Lower leg skin (tissue), 4 donors: ENCODE measurements at regions of chr12 and their contacts with region 1.

Region 1: DNA sequence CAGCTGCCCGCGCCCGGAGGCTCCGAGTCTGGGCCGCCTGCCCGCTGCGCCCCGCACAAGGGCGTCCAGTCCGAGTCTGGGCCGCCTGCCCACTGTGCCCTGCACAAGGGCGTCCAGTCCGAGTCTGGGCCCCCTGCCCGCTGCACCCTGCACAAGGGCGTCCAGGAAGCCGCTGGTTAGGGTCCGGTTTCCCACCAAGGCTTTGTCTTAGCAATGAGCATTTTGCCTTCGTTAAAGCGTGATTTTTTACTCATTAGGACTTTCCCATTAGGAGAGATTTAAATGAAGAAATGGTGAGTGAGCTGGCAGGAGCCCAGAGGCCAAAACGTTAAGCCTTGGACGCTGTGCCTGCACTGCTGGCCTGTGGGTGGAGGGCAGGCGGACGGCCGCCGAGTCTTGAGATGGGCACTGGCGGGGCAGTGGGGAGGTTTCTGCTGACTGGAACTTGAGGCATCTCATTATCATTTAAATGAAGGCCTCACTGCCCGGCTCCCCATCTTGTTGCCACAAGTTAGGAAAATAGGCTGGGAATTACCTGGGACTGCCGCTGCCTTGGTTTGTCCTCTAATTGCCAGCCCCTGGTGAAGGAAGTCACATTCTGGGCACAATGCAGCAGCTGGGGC is 36.0 kb downstream of the FBRSL1 start:
- DNase-seq: no peak
- H3K4me3 ChIP-seq: no peak overlapping the region
- CTCF ChIP-seq: no peak
- POLR2A ChIP-seq: no peak

Region 2: DNA sequence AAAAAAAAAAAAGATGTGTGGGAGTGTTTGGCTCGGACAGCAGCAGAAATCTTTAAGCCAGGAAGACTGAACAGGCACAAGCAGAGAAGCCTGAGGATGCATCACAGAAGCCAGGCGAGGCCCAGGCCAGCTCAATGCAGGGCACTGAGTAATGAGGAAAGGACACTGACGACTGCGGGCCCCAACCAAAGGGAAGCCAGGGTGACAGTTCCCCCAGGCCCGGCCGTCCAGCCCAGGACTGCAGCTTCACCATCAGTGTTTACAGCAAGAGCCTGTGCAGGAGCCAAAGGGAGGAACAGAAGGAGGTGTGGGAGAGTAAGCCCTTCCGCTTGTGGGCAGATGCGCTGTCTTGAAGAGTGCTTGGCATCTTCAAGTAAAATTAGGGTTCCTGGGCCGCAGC is 1020.4 kb before region 1 on chr12:
- intact Hi-C with region 1: loop called (anchors 5 kb)
- DNase-seq: no peak
- H3K4me3 ChIP-seq: no peak overlapping the region
- CTCF ChIP-seq: no peak
- POLR2A ChIP-seq: no peak

Region 3: DNA sequence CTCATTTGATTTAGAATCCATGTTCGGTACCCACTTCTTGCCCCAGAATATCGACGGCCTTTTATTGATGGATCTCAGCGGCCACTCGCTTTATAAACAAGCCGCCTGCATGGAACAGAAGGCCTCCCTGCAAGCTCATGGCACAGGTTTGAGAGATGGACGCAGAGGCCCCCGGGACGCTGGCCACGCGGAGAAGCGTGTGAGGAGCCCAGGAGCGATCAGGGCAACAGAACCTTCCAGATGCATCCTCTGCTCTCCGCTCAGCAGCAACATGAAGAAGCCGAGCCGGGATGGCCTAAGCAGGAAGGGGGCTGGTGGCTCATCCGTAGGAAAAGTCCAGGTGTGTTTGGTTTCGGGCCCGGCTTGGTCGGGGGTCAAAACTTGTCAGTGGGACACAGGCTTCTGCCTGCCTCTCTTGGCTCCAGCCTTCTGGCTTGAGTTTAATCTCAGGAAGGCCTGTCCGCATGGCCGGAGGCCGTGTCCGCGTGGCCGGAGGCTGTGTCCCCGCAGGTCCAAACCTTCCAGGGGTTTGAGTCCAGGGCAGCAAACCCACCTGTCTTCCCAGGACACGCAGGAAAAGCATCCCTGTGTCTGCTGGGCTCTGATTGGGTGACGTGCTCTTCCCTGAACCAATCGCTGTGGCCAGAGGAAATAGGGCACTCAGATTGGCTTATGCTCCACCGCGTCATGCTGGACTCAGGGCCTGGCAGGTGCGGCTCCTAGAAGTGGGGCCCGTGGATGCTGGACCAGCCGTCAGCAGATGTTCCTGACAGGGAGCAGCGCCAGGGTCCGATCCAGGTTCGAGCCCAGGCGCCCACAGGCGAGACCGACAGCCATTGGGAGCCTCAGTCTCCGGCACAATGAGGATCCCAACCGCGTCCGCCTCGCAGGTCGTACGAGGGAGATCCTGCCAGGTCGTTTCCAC is 261.6 kb before region 1 on chr12:
- intact Hi-C with region 1: loop called (anchors 5 kb)
- DNase-seq: no peak
- H3K4me3 ChIP-seq: no peak overlapping the region
- CTCF ChIP-seq: no peak
- POLR2A ChIP-seq: no peak